MCF 10A (cell line): ENCODE measurements at regions of chr22 and their contacts with region 1.

Region 1: DNA sequence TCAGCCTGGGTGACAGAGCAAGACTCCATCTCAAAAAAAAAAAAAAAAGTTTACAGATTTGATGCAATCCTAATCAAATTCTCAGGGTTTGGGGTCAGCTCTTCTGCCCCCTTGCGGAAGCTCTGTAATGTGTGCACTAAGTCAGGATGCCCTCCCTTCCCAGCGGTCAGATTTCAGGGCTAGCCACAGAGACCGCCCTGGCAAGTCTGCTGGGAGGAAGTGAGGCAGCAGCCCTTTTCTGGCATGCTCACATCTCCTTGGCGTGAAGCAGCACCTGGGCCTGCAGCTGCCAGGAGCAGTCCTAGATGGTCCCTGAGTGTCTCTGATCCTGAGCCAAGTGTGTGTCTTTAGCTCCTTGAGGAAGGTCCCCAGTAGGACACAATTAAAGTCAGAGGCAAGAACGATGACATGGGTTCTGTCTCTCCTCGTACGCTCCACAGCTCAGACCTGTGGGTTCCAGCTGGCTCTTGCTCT is 10.9 kb upstream of the APOBEC3C start:
- DNase-seq: peak; percentile 87
- H3K4me3 Mint-ChIP-seq: no peak overlapping the region
- H3K27ac Mint-ChIP-seq: no peak overlapping the region
- H3K4me1 Mint-ChIP-seq: no peaks in the 10 kb centered on the region
- H3K27me3 Mint-ChIP-seq: peaks cover 20% of the 10 kb centered on the region
- CTCF ChIP-seq: peak; percentile 66

Region 2: DNA sequence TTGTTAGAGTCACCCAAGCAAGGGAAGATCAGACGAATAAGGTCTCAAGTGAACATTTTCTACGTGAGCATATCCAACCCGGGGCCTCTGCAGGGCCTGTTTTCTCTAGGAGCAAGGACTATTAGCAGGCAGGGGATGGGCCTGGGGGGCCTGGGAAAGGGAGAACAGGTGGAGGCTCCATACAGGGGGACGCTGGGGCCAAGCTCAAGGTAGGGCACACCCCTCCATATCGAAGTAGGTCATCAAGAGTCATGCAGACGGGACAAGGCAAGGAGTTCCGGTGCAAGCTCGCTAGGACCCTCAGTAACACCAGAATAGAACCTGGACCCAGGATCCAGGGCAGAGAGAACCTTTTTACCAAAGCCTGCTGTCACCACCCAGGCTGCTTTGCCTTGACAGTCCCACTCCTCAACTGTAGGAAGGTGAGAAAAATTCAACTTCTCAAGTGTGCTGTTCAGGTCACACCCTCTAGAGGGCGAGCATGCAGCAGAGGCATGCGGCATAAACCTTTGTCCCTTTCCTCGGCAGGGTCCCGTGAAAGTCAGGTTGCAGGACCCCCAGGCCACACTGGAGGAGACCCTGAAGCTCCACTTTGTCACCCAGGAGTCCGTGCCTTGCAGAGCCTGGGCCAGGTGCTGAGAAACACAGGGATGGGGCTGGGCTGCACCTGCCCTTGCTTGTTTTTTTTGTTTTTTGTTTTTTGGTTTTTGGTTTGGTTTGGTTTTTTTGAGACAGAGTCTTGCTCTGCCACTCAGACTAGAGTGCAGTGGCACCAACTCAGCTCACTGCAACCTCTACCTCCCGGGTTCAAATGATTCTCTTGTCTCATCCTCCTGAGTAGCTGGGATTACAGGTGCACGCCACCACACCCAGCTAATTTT is 29.7 kb before region 1 on chr22:
- CTCF ChIA-PET with region 1: interaction called, 10 read pairs
- POLR2A ChIA-PET with region 1: no interaction called
- intact Hi-C with region 1: loop called (anchors 1 kb)
- DNase-seq: peak; percentile 51
- H3K4me3 Mint-ChIP-seq: no peak overlapping the region
- H3K27ac Mint-ChIP-seq: no peak overlapping the region
- H3K4me1 Mint-ChIP-seq: no peaks in the 10 kb centered on the region
- H3K27me3 Mint-ChIP-seq: peaks cover 45% of the 10 kb centered on the region
- CTCF ChIP-seq: peak; percentile 83

Region 3: DNA sequence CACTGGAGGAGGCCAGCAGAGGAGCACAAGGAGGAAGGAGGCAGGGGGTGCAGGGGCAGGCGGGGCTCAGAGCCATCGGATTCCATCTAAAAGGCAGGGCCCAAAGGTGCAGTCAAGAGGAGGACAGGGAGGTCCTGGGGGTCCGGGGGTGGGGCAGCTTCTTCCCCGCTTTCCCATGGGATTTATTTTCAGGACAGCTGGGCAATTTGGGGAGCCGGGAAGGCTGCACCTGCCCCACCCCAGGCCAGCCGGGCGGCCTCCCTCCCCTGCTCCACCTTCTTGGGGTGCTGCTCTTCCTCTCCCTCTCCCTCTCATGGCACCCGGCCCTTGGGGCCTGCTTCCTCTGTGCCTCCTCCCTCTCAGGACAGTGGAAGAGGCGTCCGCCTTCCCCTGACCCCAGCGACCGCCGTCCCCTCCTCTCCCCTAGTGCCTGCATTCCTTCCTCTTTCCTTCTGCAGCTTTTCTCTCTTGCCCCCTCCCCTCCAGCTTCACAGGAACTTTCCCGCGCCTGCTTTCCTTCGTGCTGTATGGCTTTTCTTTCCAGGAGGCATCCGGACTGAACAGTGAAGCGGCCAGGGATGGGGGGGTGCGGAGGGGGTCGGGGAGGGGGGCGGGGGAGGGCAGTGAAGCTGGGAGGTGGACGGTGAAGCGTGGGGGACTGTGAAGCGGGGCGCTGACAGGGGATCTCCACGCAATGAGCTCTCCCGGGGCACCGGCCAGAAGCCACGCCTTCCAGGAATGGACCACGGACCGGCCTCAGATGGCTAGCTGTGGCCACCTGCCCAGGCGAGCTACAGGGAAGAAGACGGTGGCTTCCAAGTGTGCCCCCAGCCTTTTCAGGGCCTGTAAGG is 120.8 kb after region 1 on chr22:
- CTCF ChIA-PET with region 1: interaction called, 9 read pairs
- POLR2A ChIA-PET with region 1: no interaction called
- intact Hi-C with region 1: loop called (anchors 1 kb)
- DNase-seq: no peak
- H3K4me3 Mint-ChIP-seq: no peak overlapping the region
- H3K27ac Mint-ChIP-seq: no peak overlapping the region
- H3K4me1 Mint-ChIP-seq: no peaks in the 10 kb centered on the region
- H3K27me3 Mint-ChIP-seq: no peaks in the 10 kb centered on the region
- CTCF ChIP-seq: no peak